Activated CD4-positive, alpha-beta memory T cell treated with anti-CD3 and anti-CD28 coated beads for 36 hours (primary cell): ENCODE measurements at regions of chr2 and their contacts with region 1.

Region 1: DNA sequence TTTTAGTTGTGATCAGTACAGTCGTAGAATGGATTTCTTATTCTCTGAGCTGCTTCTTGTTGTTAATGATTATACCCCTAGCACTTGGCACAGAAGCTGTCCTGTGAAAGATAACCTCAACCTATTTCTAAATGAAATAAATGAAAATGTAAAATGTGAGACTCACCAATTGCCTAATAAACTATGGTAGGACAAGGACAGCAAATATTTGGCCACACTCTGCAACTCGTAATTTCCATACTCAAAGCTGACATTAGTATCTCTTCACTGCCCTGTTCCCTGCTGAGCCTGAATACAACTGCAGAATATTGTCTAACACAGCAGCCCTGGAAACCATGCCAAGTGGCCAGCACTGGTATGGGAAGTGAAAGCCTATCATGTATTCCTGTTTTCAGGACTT is 34.5 kb downstream of the TMEM182 start:
- DNase-seq: no peak
- H3K4me3 Mint-ChIP-seq: no peak overlapping the region
- H3K27ac Mint-ChIP-seq: no peak overlapping the region
- H3K4me1 Mint-ChIP-seq: no peaks in the 10 kb centered on the region
- H3K27me3 Mint-ChIP-seq: no peaks in the 10 kb centered on the region

Region 2: DNA sequence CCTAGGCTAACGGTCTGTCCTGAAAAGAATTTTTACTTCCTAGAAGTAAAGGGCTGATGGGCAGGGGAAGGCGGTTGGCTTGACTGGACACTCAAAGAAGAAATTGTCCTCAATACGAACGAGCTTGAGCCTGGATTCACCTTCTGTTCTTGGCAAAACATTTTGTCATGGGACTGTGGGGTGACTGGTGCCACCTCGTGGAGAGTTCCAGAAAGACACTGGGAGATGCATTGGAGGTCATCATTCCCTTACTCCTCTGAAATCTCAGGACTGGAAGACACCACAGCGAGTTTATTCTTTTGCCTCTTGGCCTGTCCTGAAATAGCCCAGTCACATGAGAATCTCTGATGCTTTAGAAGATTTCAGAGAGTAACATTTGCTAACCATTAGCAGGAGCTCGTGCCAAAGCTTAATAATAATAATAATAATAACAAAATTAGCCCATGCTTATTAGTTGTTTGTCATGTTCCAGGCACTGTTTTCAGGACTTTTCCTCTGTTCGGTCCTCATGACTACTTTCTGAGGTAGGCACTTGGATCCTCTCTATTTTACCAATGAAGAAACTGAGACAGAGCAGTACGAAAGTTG is 10.0 kb after region 1 on chr2:
- CTCF ChIA-PET with region 1: interaction called, 11 read pairs
- POLR2A ChIA-PET with region 1: no interaction called
- intact Hi-C with region 1: no loop called
- DNase-seq: peak; percentile 65
- H3K4me3 Mint-ChIP-seq: no peak overlapping the region
- H3K27ac Mint-ChIP-seq: no peak overlapping the region
- H3K4me1 Mint-ChIP-seq: peaks cover 20% of the 10 kb centered on the region
- H3K27me3 Mint-ChIP-seq: peaks cover 3% of the 10 kb centered on the region

Region 3: DNA sequence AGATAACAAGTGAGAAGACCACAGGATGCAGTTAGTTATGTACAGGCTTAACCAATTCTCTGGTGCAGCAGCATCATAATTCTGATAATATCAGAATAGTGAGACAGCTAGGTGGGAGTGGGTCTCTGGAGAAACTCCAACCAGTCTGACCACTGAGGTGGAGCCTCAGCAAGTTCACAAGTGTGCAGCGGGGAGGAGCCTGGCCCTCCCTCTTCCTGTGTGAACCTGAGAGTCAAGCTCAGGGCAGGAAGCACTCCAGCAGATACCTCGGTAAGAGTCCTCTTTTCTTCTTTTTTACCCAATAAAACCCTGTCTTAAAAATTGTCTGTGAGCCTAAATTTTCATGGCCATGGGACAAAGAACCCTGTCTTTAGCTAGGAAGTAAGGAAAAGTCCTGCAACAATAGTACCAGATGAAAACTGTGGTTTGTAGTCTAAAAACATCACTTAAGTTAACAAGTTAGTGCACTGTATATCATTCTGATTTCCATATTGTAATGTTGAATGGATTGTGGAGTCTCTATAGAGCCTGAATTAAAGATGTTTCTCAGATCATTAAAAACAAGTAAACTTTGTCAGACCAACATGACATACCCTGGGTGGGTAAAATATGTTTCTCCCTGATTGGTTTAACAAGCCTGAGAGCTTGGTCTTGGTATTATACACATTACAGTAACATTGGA is 336.3 kb after region 1 on chr2:
- CTCF ChIA-PET with region 1: no interaction called
- POLR2A ChIA-PET with region 1: no interaction called
- intact Hi-C with region 1: no loop called
- DNase-seq: no peak
- H3K4me3 Mint-ChIP-seq: no peak overlapping the region
- H3K27ac Mint-ChIP-seq: no peak overlapping the region
- H3K4me1 Mint-ChIP-seq: no peaks in the 10 kb centered on the region
- H3K27me3 Mint-ChIP-seq: no peaks in the 10 kb centered on the region